ENCODE measurements at regions of chr18 and their contacts with region 1.

Region 1: DNA sequence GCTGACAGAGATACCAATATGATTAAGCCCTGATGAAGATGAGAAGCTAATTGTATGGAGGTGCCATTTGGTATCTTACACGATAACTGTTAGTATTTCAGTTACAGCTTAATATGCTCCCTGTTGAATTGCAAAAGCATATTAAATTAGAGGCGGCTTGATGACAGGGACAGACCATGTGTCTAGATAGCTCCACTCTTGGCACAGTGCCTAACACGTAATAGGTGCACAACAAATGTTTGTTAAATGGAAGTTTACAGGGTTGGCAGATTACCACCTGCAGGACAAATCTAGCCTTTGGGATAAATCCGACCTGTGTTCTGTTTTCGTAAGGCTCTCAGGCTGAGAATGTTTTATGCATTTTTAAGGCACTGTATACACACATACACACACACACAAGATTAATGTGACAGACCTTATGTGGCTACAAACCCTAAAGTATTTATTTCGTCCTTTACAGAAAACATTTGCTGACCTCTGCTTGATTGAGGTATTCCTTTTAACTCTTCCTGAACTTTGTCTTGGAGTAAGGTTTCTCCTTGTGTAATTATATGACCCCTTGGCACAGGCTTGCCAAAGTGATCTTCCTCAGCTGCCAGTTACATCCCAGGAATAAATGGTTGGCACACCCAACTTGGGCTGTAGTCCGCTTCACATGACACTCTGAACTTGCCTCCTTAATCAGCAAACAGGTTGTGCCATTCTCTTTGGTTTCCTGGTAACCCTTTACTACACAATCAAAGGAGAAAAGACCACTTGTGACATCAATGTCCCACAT is 348.9 kb downstream of the HRH4 start:
- DNase-seq: peak in 1 of 3 donors; percentile 74
- ATAC-seq: peak; percentile 88
- H3K4me3 ChIP-seq: no peak overlapping the region
- H3K4me1 ChIP-seq: peaks cover 26% of the 10 kb centered on the region
- CTCF ChIP-seq: no peak

Region 2: GRCh38 chr18:24853076-24853475 is 43.7 kb after region 1 on chr18:
- intact Hi-C with region 1: loop called in 1 of 2 experiments (anchors 5 kb)
- DNase-seq: peak; percentile 53 to 62 (median 60)
- ATAC-seq: peak; percentile 37
- H3K4me3 ChIP-seq: no peak overlapping the region
- H3K4me1 ChIP-seq: peaks cover 20% of the 10 kb centered on the region
- CTCF ChIP-seq: no peak